ENCODE measurements at regions of chr13 and their contacts with region 1.

Region 1: DNA sequence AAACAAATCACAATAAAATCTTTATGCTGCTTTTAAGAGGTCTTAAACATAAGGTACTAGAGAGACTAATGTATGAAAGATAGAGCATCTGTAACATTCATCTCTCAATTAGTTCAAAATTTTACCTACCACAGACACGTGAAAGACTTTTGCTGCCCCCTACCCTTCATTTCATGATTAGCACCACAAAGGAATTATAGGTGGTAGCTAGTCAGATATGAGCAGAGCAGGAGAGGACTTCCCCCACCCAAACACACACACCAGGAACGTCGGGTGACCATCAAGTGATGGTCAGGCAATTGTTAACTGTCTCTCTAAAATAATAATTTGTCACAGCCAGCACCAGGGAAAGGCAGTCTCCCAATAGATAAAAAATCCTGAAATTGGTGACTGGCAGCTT is 1531.7 kb upstream of the SPRY2 start:
- DNase-seq: peak in 1 of 2 donors; percentile 55
- H3K4me3 ChIP-seq: no peak overlapping the region
- H3K27ac ChIP-seq: no peak overlapping the region
- H3K4me1 ChIP-seq: no peaks in the 10 kb centered on the region
- H3K27me3 ChIP-seq: no peaks in the 10 kb centered on the region
- CTCF ChIP-seq: peak in 3 of 7 experiments; percentile 33 to 35 (median 34)
- EP300 ChIP-seq: no peak
- POLR2A ChIP-seq: no peak

Region 2: GRCh38 chr13:81540777-81541176 is 331.8 kb before region 1 on chr13:
- intact Hi-C with region 1: loop called (anchors 10 kb)
- DNase-seq: peak in 1 of 2 donors; percentile 40
- H3K4me3 ChIP-seq: no peak overlapping the region
- H3K27ac ChIP-seq: no peak overlapping the region
- H3K4me1 ChIP-seq: no peaks in the 10 kb centered on the region
- H3K27me3 ChIP-seq: no peaks in the 10 kb centered on the region
- CTCF ChIP-seq: peak in 3 of 7 experiments; percentile 26 to 41 (median 32)
- EP300 ChIP-seq: no peak
- POLR2A ChIP-seq: no peak

Region 3: GRCh38 chr13:81987159-81987558 is 114.6 kb after region 1 on chr13:
- intact Hi-C with region 1: no loop called
- DNase-seq: no peak
- H3K4me3 ChIP-seq: no peak overlapping the region
- H3K27ac ChIP-seq: no peak overlapping the region
- H3K4me1 ChIP-seq: peaks cover 0 to 11% (median 0%) of the 10 kb centered on the region in 4 donors
- H3K27me3 ChIP-seq: no peaks in the 10 kb centered on the region
- CTCF ChIP-seq: no peak
- EP300 ChIP-seq: no peak
- POLR2A ChIP-seq: no peak

Measured in stomach (tissue), 19 donors.